Lower leg skin (tissue), 4 donors: ENCODE measurements at regions of chr14 and their contacts with region 1.

Region 1: GRCh38 chr14:42070031-42070430 is 463.4 kb downstream of the LRFN5 start:
- DNase-seq: no peak
- H3K4me3 ChIP-seq: no peak overlapping the region
- CTCF ChIP-seq: no peak
- POLR2A ChIP-seq: no peak

Region 2: DNA sequence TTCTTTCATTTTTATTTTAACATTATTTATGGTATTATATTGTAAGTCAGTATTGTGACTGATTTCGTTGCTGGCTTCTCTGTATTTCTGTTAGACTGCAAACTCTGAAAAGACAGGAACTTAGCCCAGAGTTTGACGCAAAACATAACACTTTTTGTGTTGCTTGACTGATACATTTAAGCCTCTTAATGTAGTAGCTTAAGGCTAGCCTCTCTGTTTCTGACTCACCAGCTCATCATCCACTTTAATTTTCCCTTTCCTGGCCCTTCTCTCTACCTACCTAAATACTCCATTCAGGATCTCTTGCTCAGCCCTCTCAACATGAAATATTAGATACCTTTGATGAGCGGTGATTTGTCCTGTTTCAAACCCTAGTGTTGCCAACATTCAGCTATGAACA is 42.8 kb before region 1 on chr14:
- intact Hi-C with region 1: loop called (anchors 2 kb)
- DNase-seq: no peak
- H3K4me3 ChIP-seq: no peak overlapping the region
- CTCF ChIP-seq: no peak
- POLR2A ChIP-seq: no peak